ENCODE measurements at regions of chr2 and their contacts with region 1.

Region 1: GRCh38 chr2:202375609-202376408 is at the start of gene BMPR2:
- DNase-seq: peak; percentile 62 to 77 (median 73)
- H3K4me3 ChIP-seq: peak within 1 kb of the TSS; percentile 87 to 99 (median 93)
- H3K4me3 Mint-ChIP-seq: peak within 1 kb of the TSS; percentile 99 to 100
- H3K27ac ChIP-seq: peak within 1 kb of the TSS; percentile 71 to 77
- H3K27ac Mint-ChIP-seq: peak within 1 kb of the TSS; percentile 82 to 92 (median 88)
- H3K4me1 ChIP-seq: peaks cover 22 to 42% of the 10 kb centered on the region in 2 donors
- H3K4me1 Mint-ChIP-seq: peaks cover 40% of the 10 kb centered on the region
- H3K27me3 ChIP-seq: peaks cover 4 to 24% of the 10 kb centered on the region in 2 donors
- H3K27me3 Mint-ChIP-seq: peaks cover 8 to 40% (median 18%) of the 10 kb centered on the region in 3 donors
- CTCF ChIP-seq: no peak
- polyA plus RNA-seq, gene BMPR2: 4.1 to 6.4 (median 4.8) TPM

Region 2: GRCh38 chr2:200728630-200729029 is 1647.2 kb before region 1 on chr2:
- intact Hi-C with region 1: no loop called
- DNase-seq: peak in 2 of 3 donors; percentile 10
- H3K4me3 ChIP-seq: no peak overlapping the region
- H3K4me3 Mint-ChIP-seq: no peak overlapping the region
- H3K27ac ChIP-seq: no peak overlapping the region
- H3K27ac Mint-ChIP-seq: no peak overlapping the region
- H3K4me1 ChIP-seq: no peaks in the 10 kb centered on the region
- H3K4me1 Mint-ChIP-seq: no peaks in the 10 kb centered on the region
- H3K27me3 ChIP-seq: no peaks in the 10 kb centered on the region
- H3K27me3 Mint-ChIP-seq: peaks cover 0 to 4% (median 0%) of the 10 kb centered on the region in 3 donors
- CTCF ChIP-seq: no peak

Region 3: DNA sequence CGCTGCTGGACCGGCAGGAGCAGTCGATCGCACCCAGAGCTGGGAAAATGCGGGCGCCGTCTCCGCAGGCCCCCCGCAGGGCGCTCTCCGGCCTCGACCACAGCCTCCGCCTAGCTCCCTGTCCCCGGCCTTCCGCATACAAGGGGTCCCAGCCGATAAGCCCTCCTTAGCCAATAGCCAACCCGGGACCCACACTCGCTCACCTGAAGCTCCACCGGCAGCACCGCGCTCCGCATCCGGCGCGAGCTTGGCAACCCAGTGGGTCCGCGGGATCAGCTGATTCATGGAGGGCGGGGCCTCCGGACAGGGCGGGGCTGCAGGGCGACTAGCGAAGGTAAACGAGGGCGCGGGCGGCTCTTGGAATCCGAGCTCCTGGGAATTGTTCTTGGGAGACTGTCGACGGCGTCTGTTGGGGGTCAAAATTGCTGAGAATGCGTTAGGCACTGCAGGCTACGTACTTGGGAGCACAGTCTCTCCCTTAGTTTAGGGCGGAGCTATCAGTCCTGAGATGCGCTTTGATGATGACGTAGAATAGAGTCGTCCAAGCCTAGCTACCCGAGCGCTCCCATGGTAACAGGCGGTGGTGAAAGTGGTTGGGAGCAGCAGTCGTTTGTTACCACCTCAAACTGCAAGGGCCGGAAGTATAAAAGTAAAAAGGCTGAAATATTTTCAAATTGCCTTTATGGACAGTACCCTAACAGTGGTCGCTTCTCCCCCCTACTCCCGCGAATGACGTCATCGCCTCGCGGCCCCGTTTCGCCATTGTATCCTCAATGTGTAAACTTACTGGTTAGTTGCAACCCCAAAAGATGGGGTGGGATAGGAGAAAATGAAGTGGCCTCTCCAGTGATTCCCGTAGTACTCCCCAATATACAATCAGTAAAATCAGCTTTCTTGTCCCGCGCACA is 594.9 kb before region 1 on chr2 and contains the start of gene ALS2:
- intact Hi-C with region 1: loop called in 1 of 2 experiments (anchors 5 kb)
- DNase-seq: peak; percentile 85 to 87 (median 87)
- H3K4me3 ChIP-seq: peak within 1 kb of the TSS; percentile 77 to 98 (median 92)
- H3K4me3 Mint-ChIP-seq: peak within 1 kb of the TSS; percentile 96 to 98
- H3K27ac ChIP-seq: peak within 1 kb of the TSS; percentile 29 to 93
- H3K27ac Mint-ChIP-seq: peak within 1 kb of the TSS; percentile 92 to 99 (median 97)
- H3K4me1 ChIP-seq: peaks cover 16 to 18% of the 10 kb centered on the region in 2 donors
- H3K4me1 Mint-ChIP-seq: peaks cover 23% of the 10 kb centered on the region
- H3K27me3 ChIP-seq: no peaks in the 10 kb centered on the region
- H3K27me3 Mint-ChIP-seq: peaks cover 0 to 9% (median 5%) of the 10 kb centered on the region in 3 donors
- CTCF ChIP-seq: no peak
- polyA plus RNA-seq, gene ALS2: 2.6 to 4.7 (median 3.1) TPM

Region 4: DNA sequence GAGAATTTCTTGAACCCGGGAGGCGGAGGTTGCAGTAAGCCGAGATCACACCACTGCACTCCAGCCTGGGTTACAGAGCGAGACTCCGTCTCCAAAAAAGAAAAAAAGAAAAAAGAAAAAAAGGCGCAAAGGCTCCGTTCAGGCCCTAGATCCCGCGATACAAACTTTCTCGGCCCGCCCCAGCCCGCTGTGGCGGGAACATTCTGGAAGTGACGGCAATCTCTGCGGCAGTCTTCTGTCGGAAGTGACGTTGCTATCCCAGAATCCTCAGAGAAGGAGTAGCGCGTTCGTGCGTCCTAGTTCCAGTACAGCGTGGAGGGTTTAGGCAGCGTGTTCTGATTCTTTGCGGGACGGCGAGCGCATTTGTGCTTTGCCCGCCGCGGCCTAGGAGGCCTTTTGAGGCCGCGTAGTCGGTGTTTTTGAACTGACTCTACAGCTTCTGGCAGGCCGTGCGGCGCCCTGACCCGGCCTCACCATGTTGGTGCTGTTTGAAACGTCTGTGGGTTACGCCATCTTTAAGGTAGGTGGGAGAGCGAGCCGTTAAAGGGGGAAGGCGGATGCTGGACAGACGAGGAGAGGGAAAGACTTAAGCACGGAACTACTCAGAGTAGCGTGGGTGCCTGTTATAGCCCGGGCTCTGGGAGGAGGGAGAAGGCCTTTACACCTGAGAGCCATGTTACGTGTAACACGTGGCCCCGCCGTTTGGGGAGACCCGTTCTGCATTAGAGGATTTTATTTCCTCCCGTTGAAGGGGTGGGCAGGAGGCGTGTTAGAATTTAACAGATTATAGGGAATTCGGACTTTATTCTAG is 110.1 kb before region 1 on chr2 and contains the start of gene NOP58:
- intact Hi-C with region 1: loop called in 1 of 2 experiments (anchors 10 kb)
- DNase-seq: peak; percentile 89 to 92 (median 89)
- H3K4me3 ChIP-seq: peak within 1 kb of the TSS; percentile 85 to 97 (median 95)
- H3K4me3 Mint-ChIP-seq: peak within 1 kb of the TSS; percentile 45 to 51
- H3K27ac ChIP-seq: peak within 1 kb of the TSS; percentile 93 to 95
- H3K27ac Mint-ChIP-seq: peak within 1 kb of the TSS in 4 of 7 donors; percentile 42 to 76 (median 48)
- H3K4me1 ChIP-seq: peaks cover 11 to 31% of the 10 kb centered on the region in 2 donors
- H3K4me1 Mint-ChIP-seq: peaks cover 13% of the 10 kb centered on the region
- H3K27me3 ChIP-seq: no peaks in the 10 kb centered on the region
- H3K27me3 Mint-ChIP-seq: peaks cover 0 to 3% (median 2%) of the 10 kb centered on the region in 3 donors
- CTCF ChIP-seq: no peak
- polyA plus RNA-seq, gene NOP58: 19.4 to 25.4 (median 22.5) TPM

Region 5: DNA sequence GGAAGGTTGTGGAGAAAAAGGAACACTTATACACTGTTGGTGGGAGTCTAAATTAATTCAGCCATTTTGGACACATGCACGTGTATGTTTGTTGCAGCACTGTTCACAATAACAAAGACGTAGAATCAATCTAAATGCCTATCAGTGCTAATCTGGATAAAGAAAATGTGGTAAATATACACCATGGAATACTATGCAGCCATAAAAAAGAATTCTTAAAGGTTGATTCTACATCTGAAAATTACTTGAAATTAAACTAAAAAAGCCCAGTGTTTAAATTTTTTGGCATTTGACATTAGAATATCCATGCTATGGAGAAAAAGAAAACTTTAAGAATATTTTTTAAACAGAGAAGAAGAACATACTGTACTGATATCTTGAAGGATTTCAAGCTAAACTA is 84.3 kb after region 1 on chr2:
- intact Hi-C with region 1: no loop called
- DNase-seq: no peak
- H3K4me3 ChIP-seq: no peak overlapping the region
- H3K4me3 Mint-ChIP-seq: no peak overlapping the region
- H3K27ac ChIP-seq: no peak overlapping the region
- H3K27ac Mint-ChIP-seq: no peak overlapping the region
- H3K4me1 ChIP-seq: no peaks in the 10 kb centered on the region
- H3K4me1 Mint-ChIP-seq: no peaks in the 10 kb centered on the region
- H3K27me3 ChIP-seq: no peaks in the 10 kb centered on the region
- H3K27me3 Mint-ChIP-seq: no peaks in the 10 kb centered on the region
- CTCF ChIP-seq: no peak